ENCODE measurements at regions of chr10 and their contacts with region 1.

Region 1: DNA sequence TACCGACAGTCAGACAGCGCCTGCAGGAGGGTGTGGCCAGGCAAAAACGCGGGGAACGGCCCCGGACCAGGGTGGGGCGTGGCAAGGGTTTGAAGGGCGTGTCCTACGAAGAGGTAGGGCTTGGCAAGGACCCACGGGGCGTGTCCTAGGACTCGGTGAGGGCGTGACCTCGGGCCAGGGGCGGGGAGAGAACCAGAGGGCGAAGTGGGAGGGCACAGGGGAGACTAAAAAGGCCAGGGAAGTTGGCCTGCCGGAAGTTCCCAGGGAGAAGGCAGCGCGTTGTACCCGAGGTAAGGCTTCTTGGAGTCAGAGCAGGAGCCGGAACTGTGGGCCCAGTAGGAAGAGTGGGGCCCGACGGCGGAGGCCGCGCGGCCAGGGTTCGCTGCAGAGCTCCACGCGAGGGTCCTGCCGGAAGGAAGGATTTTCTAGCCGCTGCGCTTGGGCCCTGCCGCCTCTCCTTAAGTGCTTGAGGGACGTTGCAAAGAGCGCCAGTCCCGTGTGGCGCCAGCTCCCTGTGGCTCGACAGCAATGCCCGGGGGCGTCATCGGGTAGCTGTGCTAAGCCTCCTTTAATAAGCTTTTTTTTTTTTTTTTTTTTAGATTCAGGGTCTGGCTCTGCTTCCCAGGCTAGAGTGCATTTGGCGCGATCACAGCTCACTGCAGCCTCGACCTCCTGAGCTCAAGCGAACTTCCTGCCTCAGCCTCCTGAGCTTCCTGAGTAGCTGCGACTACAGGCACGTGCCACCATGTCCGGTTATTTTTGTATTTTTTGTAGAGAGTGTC is at the start of gene PTER:
- DNase-seq: peak; percentile 96 to 98
- H3K4me3 ChIP-seq: peak within 1 kb of the TSS; percentile 3 to 42 (median 27)
- H3K27ac ChIP-seq: peak within 1 kb of the TSS; percentile 70 to 86 (median 85)
- H3K4me1 ChIP-seq: peaks cover 32 to 35% of the 10 kb centered on the region in 2 donors
- H3K27me3 ChIP-seq: no peaks in the 10 kb centered on the region
- CTCF ChIP-seq: no peak
- POLR2A ChIP-seq: peak; percentile 35 to 94
- total RNA-seq, gene PTER: 21.0 to 31.2 (median 24.4) TPM

Region 2: DNA sequence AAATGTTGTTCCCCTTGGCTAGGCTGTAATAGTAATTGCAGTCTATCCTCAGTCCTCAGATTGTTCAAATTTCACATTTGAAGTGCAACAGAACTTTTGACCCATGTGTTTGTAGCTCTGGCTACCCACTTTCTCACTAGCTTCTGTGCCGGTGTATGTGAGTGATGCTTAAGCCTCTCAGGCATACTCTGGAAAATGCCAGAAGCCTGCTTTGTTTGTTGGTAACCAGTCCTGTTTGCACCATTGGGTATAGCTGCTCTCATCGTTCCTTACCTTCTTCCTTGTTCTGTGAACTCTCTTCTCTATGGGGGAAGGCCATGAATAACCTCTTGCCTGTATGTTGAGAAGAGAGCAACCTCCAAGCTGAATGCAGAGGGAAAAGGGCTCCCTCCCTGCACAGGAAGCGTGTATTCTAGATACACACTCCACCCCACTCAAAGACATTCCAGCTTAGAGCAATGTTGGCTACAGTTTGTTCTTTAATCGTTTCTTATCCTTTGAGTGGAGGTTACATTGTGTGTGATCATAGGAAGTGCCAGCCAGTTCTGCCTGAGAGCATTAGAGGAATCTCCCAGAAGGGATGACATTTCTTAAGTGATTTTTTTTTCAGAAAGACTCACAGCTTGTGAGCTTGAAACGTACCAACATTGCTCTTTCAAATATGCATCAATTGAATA is 44.2 kb after region 1 on chr10:
- intact Hi-C with region 1: loop called (anchors 10 kb)
- DNase-seq: peak; percentile 67 to 70
- H3K4me3 ChIP-seq: no peak overlapping the region
- H3K27ac ChIP-seq: peak overlapping the region; percentile 23 to 83 (median 83)
- H3K4me1 ChIP-seq: peaks cover 22 to 31% of the 10 kb centered on the region in 2 donors
- H3K27me3 ChIP-seq: no peaks in the 10 kb centered on the region
- CTCF ChIP-seq: no peak
- POLR2A ChIP-seq: no peak

Measured in thyroid gland (tissue), 4 donors.